H1 (cell line): ENCODE measurements at regions of chr16 and their contacts with region 1.

Region 1: DNA sequence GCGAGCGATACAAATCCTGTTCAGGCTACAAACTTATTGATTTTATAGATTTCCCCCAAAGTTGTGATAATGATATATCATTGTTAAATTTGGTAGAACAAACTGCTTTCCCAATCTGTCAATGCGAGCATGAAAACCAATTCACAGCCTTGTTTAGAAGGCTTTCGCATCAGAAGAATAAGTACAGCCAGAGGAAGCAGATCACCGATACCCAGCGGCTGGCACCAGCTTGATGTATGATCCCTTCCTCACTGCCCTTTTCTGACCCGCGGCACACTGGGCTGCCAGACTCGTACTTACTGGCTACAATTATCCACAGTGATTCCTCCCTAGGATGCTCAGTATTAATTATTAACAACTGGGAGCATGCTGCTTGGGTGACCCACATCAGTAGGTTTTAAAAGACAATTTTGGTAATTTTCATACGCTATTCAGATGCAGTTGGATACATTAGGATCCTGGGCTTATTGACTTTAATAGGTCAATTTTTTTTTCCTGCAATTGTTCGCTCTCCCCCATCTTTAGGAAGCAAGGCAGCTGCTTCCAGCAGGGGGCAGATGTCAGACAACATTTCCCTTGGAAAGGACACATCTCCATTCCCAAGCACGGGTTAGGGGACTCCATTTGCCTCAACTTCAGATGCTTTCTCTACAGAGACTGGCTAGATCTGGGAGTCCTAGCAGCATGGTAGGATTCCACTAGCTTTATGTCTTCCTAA is 582.7 kb upstream of the PSMD7 start:
- DNase-seq: peak in 1 of 2 experiments; percentile 78
- H3K4me3 ChIP-seq: no peak overlapping the region
- H3K27ac ChIP-seq: no peak overlapping the region
- H3K4me1 ChIP-seq: peaks cover 0 to 8% (median 1%) of the 10 kb centered on the region in 4 experiments; a peak in 2 of 7 replicates
- H3K27me3 ChIP-seq: no peaks in the 10 kb centered on the region
- CTCF ChIP-seq: peak; percentile 46 to 73 (median 57)
- EP300 ChIP-seq: no peak
- POLR2A ChIP-seq: no peak
- RAD21 ChIP-seq: peak; percentile 53 to 60

Region 2: GRCh38 chr16:73670836-73671820 is 42.8 kb before region 1 on chr16:
- CTCF ChIA-PET with region 1: interaction called, 12 read pairs
- POLR2A ChIA-PET with region 1: no interaction called
- DNase-seq: no peak
- H3K4me3 ChIP-seq: peak overlapping the region in 1 of 4 experiments; percentile 13; a peak in 1 of 8 replicates
- H3K27ac ChIP-seq: no peak overlapping the region
- H3K4me1 ChIP-seq: peaks cover 0 to 7% (median 4%) of the 10 kb centered on the region in 4 experiments; a peak in 3 of 7 replicates
- H3K27me3 ChIP-seq: no peaks in the 10 kb centered on the region
- CTCF ChIP-seq: no peak
- EP300 ChIP-seq: no peak
- POLR2A ChIP-seq: no peak
- RAD21 ChIP-seq: no peak

Region 3: DNA sequence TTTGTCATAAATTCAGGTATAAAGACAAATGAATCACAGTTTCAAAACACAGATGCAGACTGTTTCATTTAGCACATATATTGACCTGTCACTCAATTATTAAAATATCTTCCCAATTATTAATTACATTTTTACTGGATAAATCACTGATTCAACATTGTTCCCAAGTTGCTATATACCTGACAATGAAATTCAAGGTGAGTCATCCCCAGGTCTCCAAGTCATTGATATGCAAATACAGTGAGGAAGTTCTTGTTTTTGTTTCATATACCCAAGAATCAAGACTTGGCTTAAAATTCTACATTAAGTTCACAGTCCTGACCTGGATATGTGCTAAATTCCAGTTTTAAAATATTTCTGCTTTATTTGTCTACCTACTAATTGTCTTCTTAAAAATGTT is 16.6 kb before region 1 on chr16:
- CTCF ChIA-PET with region 1: interaction called, 13 read pairs
- POLR2A ChIA-PET with region 1: no interaction called
- DNase-seq: no peak
- H3K4me3 ChIP-seq: 0 out of 8 replicates have a peak overlapping the region, but pooled peaks of 1 of the 4 experiments have one; percentile 6
- H3K27ac ChIP-seq: 0 out of 2 replicates have a peak overlapping the region, but pooled peaks have one; percentile 22
- H3K4me1 ChIP-seq: peaks cover 0 to 10% (median 3%) of the 10 kb centered on the region in 4 experiments; a peak in 2 of 7 replicates
- H3K27me3 ChIP-seq: no peaks in the 10 kb centered on the region; a peak in 1 of 7 replicates
- CTCF ChIP-seq: no peak
- EP300 ChIP-seq: no peak
- POLR2A ChIP-seq: no peak
- RAD21 ChIP-seq: no peak

Region 4: GRCh38 chr16:73725156-73725555 is 11.2 kb after region 1 on chr16:
- CTCF ChIA-PET with region 1: interaction called, 32 read pairs
- POLR2A ChIA-PET with region 1: no interaction called
- DNase-seq: no peak
- H3K4me3 ChIP-seq: no peak overlapping the region
- H3K27ac ChIP-seq: no peak overlapping the region
- H3K4me1 ChIP-seq: no peaks in the 10 kb centered on the region
- H3K27me3 ChIP-seq: no peaks in the 10 kb centered on the region
- CTCF ChIP-seq: no peak
- EP300 ChIP-seq: no peak
- POLR2A ChIP-seq: no peak
- RAD21 ChIP-seq: no peak

Region 5: DNA sequence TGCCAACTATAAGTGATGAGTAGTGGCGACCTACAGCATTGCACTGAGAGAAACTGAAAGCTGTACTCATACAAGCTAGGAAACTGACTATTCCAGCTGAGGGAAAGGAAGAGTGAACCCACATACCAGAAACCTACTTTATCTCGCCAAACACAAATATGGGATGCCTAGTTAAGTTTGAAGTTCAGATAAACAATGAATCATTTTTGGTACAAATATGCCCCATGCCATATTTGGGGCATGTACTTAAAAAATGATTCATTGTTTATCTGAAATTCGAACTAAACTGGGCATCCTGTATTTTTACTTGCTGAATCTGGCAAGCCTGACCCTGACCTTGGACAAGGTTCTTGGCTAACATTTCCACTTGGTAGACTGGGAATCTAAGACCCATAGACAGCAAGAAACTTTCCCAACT is 54.9 kb after region 1 on chr16:
- CTCF ChIA-PET with region 1: no interaction called
- POLR2A ChIA-PET with region 1: no interaction called
- DNase-seq: no peak
- H3K4me3 ChIP-seq: no peak overlapping the region
- H3K27ac ChIP-seq: no peak overlapping the region
- H3K4me1 ChIP-seq: no peaks in the 10 kb centered on the region
- H3K27me3 ChIP-seq: no peaks in the 10 kb centered on the region
- CTCF ChIP-seq: no peak
- EP300 ChIP-seq: no peak
- POLR2A ChIP-seq: no peak
- RAD21 ChIP-seq: no peak